ENCODE measurements at regions of chr2 and their contacts with region 1.

Region 1: DNA sequence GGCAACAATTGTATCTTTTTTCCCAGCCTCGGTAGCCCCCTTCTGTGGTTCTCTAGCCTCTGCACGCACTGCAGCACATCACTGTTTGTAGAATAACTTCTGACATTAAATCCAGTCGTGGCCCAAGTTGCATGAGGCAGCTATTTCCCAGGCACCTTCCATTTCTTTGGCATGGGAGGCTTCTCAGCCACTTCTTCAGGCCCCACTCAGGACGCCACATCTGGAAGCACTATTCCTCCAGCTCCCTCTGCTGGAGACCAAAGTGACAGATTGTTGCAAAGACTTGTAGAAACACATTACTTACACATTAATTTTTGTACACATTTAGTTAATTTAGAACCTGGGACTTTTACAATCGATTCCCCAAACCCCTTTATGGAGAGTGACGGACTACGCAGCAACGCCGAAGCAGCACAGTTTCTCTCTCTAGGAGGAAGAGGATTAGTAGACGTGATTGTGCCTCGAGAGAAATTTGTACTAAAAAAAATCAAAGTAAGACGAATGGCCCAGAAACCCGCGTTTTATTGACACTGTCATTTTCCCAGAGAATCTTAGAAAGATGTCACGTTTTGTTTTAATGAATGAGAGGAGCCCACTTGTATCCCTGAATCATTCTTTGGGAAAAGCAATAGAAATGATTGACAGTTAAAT is 57.8 kb upstream of the RGPD5 start:
- DNase-seq: peak; percentile 17 to 74
- ATAC-seq: peak; percentile 70 to 90; a peak in 4 of 6 replicates
- H3K4me3 ChIP-seq: no peak overlapping the region
- H3K27ac ChIP-seq: no peak overlapping the region
- H3K4me1 ChIP-seq: 0 out of 3 replicates have a peak, but pooled peaks cover 3% of the 10 kb centered on the region
- CTCF ChIP-seq: peak; percentile 86
- EP300 ChIP-seq: no peak
- POLR2A ChIP-seq: no peak
- RAD21 ChIP-seq: peak; percentile 88 to 89

Region 2: GRCh38 chr2:109516445-109517117 is 219.7 kb before region 1 on chr2:
- CTCF ChIA-PET with region 1: interaction called, 14 read pairs
- POLR2A ChIA-PET with region 1: no interaction called
- DNase-seq: peak; percentile 65 to 88
- ATAC-seq: peak; percentile 86 to 98
- H3K4me3 ChIP-seq: no peak overlapping the region
- H3K27ac ChIP-seq: peak overlapping the region in 1 of 2 experiments; percentile 20; a peak in 1 of 6 replicates
- H3K4me1 ChIP-seq: peaks cover 7% of the 10 kb centered on the region; the same call in 1 of the 3 replicates
- CTCF ChIP-seq: peak; percentile 87
- EP300 ChIP-seq: no peak
- POLR2A ChIP-seq: no peak
- RAD21 ChIP-seq: peak; percentile 88 to 90